IMR-90 (cell line): ENCODE measurements at regions of chr5 and their contacts with region 1.

Region 1: DNA sequence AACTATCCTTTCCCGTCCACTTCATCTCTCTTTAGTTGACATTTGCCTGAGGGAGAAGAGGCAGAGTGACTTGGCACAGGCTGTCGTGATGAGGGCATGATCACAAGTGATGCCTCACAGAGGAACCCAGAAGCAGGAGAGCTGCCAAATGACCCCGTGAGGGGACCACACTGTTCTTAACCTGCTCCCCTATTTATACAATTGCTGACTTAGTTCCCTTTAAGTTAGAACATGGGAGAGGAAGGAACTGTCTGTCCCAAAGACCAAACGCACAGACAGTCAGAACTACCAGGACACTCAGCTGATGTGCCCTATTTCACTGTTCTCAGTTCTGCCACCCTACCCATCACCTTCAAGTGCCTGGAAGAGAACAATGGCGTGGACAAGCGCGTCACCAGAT is 73.7 kb downstream of the SLC1A3 start:
- DNase-seq: no peak
- ATAC-seq: no peak
- H3K4me3 ChIP-seq: no peak overlapping the region
- H3K27ac ChIP-seq: no peak overlapping the region
- H3K4me1 ChIP-seq: peaks cover 5% of the 10 kb centered on the region; the same call in 1 of the 2 replicates
- H3K27me3 ChIP-seq: no peaks in the 10 kb centered on the region
- CTCF ChIP-seq: no peak
- POLR2A ChIP-seq: no peak
- RAD21 ChIP-seq: no peak

Region 2: DNA sequence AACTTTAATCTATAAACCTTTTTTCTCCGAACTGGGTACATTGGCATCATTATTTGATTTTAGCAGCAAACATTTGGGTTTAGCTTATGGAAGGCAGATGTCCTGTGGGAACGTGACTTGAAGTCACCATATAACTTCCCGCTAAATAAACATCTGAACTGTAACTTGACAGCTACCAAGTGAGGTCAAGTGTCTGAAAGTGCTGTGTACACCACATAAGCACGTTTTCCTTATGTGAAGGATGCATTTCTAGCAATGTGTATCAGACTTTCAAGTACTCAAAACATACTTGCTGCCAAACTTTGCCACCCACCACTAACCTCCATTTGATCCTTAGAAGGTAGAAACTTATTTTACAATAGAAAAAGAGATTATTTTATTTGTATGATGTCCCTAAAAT is 38.0 kb before region 1 on chr5:
- CTCF ChIA-PET with region 1: no interaction called
- POLR2A ChIA-PET with region 1: no interaction called
- dilution Hi-C with region 1: no loop called
- in situ Hi-C with region 1: no loop called
- intact Hi-C with region 1: loop called (anchors 1 kb)
- DNase-seq: no peak
- ATAC-seq: no peak
- H3K4me3 ChIP-seq: no peak overlapping the region
- H3K27ac ChIP-seq: no peak overlapping the region
- H3K4me1 ChIP-seq: 0 out of 2 replicates have a peak, but pooled peaks cover 2% of the 10 kb centered on the region
- H3K27me3 ChIP-seq: peaks cover under 1% of the 10 kb centered on the region; the same call in 1 of the 2 replicates
- CTCF ChIP-seq: no peak
- POLR2A ChIP-seq: no peak
- RAD21 ChIP-seq: no peak

Region 3: GRCh38 chr5:36820900-36821299 is 140.8 kb after region 1 on chr5:
- CTCF ChIA-PET with region 1: no interaction called
- POLR2A ChIA-PET with region 1: no interaction called
- dilution Hi-C with region 1: no loop called
- in situ Hi-C with region 1: no loop called
- intact Hi-C with region 1: no loop called
- DNase-seq: no peak
- ATAC-seq: no peak
- H3K4me3 ChIP-seq: no peak overlapping the region
- H3K27ac ChIP-seq: no peak overlapping the region
- H3K4me1 ChIP-seq: no peaks in the 10 kb centered on the region
- H3K27me3 ChIP-seq: no peaks in the 10 kb centered on the region
- CTCF ChIP-seq: no peak
- POLR2A ChIP-seq: no peak
- RAD21 ChIP-seq: no peak